WTC11 (cell line): ENCODE measurements at regions of chr1 and their contacts with region 1.

Region 1: GRCh38 chr1:239951511-239952140 is 140.1 kb upstream of the FMN2 start:
- DNase-seq: peak; percentile 64
- ATAC-seq: no peak
- H3K4me3 Mint-ChIP-seq: no peak overlapping the region
- H3K27ac Mint-ChIP-seq: no peak overlapping the region
- H3K4me1 Mint-ChIP-seq: no peaks in the 10 kb centered on the region
- H3K27me3 Mint-ChIP-seq: no peaks in the 10 kb centered on the region
- CTCF ChIP-seq: peak; percentile 72

Region 2: DNA sequence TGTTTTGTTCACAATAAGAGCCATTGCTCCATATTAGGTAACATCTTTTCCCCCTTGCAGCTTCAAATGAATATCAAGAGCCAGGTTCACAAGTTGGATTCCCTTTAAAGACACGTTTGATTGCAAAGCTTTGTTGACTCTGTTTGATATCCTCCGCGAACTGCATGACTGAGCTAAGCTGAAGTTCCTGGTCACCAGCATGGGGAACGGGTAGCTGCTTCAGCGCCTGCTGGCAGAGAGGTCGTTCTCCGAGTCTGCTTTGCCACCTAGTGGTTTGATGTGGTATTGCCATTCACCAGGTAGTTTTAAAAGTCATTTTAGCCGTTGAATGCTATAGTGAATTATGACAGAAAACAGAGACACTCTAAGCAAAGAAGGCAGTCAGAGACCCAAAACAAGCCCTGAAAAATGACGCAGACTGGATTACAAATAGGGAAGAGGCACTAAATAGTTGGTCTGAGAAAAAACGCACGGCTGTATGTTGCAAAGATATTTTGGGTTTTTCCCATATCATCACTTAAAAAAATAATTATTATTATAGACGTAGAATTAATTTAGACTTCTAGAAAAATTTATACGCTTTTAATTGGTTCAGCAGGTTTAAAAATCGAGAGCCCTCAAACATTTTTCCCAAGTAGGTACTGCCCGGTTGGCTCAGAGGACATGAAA is 53.4 kb before region 1 on chr1:
- CTCF ChIA-PET with region 1: interaction called, 11 read pairs
- POLR2A ChIA-PET with region 1: no interaction called
- DNase-seq: peak; percentile 80
- ATAC-seq: peak; percentile 97
- H3K4me3 Mint-ChIP-seq: peak overlapping the region; percentile 46
- H3K27ac Mint-ChIP-seq: no peak overlapping the region
- H3K4me1 Mint-ChIP-seq: peaks cover 14% of the 10 kb centered on the region
- H3K27me3 Mint-ChIP-seq: no peaks in the 10 kb centered on the region
- CTCF ChIP-seq: peak; percentile 91

Region 3: GRCh38 chr1:240004086-240004749 is 52.6 kb after region 1 on chr1:
- CTCF ChIA-PET with region 1: interaction called, 60 read pairs
- POLR2A ChIA-PET with region 1: no interaction called
- DNase-seq: peak; percentile 38
- ATAC-seq: no peak; the same call in 1 of the 2 replicates
- H3K4me3 Mint-ChIP-seq: no peak overlapping the region
- H3K27ac Mint-ChIP-seq: no peak overlapping the region
- H3K4me1 Mint-ChIP-seq: no peaks in the 10 kb centered on the region
- H3K27me3 Mint-ChIP-seq: peaks cover 11% of the 10 kb centered on the region
- CTCF ChIP-seq: peak; percentile 91